ENCODE measurements at regions of chr3 and their contacts with region 1.

Region 1: GRCh38 chr3:102229062-102229655 is 205.7 kb upstream of the ZPLD1 start:
- DNase-seq: peak; percentile 60
- H3K27ac ChIP-seq: no peak overlapping the region
- CTCF ChIP-seq: peak; percentile 93

Region 2: GRCh38 chr3:101803173-101803782 is 425.9 kb before region 1 on chr3:
- CTCF ChIA-PET with region 1: interaction called, 10 read pairs
- POLR2A ChIA-PET with region 1: no interaction called
- DNase-seq: peak; percentile 62
- H3K27ac ChIP-seq: no peak overlapping the region
- CTCF ChIP-seq: peak; percentile 89

Region 3: DNA sequence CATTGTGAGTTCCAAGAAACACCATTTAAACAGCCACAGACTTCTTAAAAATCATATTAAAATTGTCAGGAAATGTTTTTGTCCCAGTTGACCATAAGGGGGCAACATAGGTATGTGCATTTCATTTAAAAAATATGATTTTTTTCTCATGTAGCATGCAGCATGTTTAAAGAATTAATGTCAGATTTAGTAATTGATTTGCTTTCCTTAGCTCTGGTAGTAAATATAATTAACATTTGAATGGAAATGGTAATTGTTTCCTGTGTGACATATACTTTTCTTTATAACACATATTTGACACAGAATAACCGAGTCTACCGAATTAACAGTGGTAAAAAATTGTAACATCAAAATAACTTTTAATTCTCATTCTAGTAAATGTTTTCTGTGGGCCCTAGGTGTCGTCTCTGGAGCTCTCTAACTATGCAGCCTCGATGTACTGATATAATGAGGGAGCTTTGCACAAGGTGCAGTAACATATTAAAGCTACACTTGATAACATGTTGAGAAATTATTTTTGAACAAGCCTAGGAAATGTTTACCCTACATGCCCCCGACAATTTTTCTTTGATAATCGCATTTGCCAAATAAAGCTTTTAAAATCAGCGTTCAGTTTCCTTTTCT is 415.2 kb before region 1 on chr3:
- CTCF ChIA-PET with region 1: interaction called, 10 read pairs
- POLR2A ChIA-PET with region 1: no interaction called
- DNase-seq: peak; percentile 26
- H3K27ac ChIP-seq: no peak overlapping the region
- CTCF ChIP-seq: peak; percentile 71

Region 4: GRCh38 chr3:102215166-102215565 is 14.0 kb before region 1 on chr3:
- CTCF ChIA-PET with region 1: no interaction called
- POLR2A ChIA-PET with region 1: no interaction called
- DNase-seq: no peak
- H3K27ac ChIP-seq: no peak overlapping the region
- CTCF ChIP-seq: no peak

Region 5: DNA sequence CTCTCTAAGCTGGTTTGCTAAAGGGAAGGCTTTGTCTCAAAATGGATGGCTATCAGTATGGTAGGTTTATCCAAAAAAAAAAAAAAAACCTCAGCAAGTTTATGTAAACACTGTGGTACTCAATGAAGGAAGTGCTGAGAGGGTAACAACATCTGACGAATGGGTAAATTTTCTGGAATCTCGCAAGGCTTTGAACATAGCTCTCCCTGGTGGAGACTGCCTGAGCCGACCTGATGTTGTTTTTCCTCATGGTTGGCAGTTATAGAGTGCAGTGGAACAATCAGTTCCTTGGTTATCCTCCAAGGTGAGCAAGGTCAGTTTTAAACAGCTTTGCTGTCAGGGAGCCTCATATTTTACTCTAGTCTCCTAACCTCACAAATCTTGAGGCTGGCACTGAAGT is 300.3 kb after region 1 on chr3:
- CTCF ChIA-PET with region 1: interaction called, 13 read pairs
- POLR2A ChIA-PET with region 1: no interaction called
- DNase-seq: peak; percentile 15
- H3K27ac ChIP-seq: no peak overlapping the region
- CTCF ChIP-seq: no peak

Region 6: DNA sequence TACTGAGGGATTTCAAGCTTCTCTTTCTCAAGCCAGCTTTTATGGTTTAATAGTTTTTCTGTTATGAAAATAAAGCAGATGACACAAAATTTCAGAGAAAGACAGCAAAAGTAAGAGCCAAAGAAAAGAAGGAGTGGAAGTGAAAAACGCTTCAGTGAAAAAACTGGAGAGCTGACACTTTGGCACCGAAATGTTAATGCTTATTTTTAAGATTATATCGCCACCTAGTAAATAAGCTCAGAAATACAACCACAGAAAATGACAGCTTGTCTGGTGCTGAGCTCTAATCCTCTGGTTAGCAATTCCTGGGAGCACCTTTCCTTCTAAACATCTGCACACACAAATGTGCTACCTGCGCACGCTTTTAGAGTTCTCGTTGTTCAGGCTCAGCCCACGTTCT is 307.3 kb after region 1 on chr3:
- CTCF ChIA-PET with region 1: interaction called, 38 read pairs
- POLR2A ChIA-PET with region 1: no interaction called
- DNase-seq: peak; percentile 41
- H3K27ac ChIP-seq: no peak overlapping the region
- CTCF ChIP-seq: peak; percentile 54

Measured in RWPE1 (cell line).